ENCODE measurements at regions of chr1 and their contacts with region 1.

Region 1: DNA sequence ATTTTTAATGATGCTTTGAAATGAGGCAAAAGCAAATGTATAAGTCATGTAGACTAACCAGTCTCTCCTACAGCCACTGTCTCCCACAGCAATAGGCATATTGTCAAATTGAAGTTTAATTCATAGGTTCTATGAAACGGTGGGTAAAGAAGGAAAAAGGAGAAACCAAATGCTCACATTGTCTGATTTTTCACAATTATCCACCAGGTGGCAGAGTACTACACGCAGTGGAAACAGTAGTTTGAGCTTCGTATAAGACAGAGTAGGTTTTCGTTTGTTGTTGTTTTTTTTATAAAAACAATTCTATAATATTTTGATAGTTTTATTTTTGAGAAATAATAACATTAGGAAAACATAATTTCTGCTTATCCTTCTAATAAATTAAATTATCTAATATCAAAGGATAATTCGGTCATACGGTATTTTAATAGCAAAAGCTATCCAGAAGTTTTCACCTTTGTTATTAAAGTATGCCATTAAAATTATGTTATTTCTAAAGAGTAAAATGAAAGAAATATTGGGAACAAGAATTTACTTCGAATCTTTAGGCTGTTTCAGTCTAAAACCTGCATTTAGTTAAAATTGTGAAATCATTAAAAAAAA is 39.1 kb downstream of the TYW3 start:
- DNase-seq: peak; percentile 7
- H3K4me3 ChIP-seq: peak overlapping the region in 1 of 2 experiments; percentile 22; a peak in 1 of 4 replicates
- H3K27ac ChIP-seq: no peak overlapping the region
- H3K4me1 ChIP-seq: no peaks in the 10 kb centered on the region; a peak in 1 of 4 replicates
- H3K27me3 ChIP-seq: 0 out of 2 replicates have a peak, but pooled peaks cover 5% of the 10 kb centered on the region
- CTCF ChIP-seq: peak; percentile 76
- EP300 ChIP-seq: no peak
- RAD21 ChIP-seq: peak; percentile 86

Region 2: GRCh38 chr1:74504125-74504932 is 267.7 kb before region 1 on chr1:
- CTCF ChIA-PET with region 1: no interaction called
- POLR2A ChIA-PET with region 1: no interaction called
- DNase-seq: peak; percentile 59
- H3K4me3 ChIP-seq: no peak overlapping the region; a peak in 1 of 4 replicates
- H3K27ac ChIP-seq: peak overlapping the region in 1 of 2 experiments; percentile 95; a peak in 2 of 4 replicates
- H3K4me1 ChIP-seq: peaks cover 0 to 23% of the 10 kb centered on the region in 2 experiments; a peak in 2 of 4 replicates
- H3K27me3 ChIP-seq: no peaks in the 10 kb centered on the region
- CTCF ChIP-seq: peak; percentile 81
- EP300 ChIP-seq: no peak
- RAD21 ChIP-seq: peak; percentile 84

Region 3: DNA sequence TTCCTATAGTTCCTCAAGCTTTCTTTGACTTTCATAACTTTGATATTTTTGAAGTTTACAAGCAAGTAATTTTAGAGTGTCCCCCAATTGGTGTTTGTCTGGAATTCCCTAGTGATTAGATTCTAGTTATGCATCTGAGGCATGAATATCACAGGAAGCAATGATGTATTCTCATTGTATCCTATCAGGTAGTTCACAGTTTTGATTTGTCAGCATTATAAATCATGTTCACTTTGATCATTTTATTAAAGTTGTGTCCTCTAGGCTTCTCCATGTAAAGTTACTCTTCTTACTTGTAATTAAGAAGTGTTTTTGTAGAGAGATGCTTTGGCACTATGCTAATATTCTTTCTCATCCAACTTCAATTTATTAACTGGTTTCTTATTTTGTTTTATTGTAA is 13.9 kb after region 1 on chr1:
- CTCF ChIA-PET with region 1: interaction called, 11 read pairs
- POLR2A ChIA-PET with region 1: no interaction called
- DNase-seq: no peak
- H3K4me3 ChIP-seq: no peak overlapping the region
- H3K27ac ChIP-seq: no peak overlapping the region
- H3K4me1 ChIP-seq: no peaks in the 10 kb centered on the region
- H3K27me3 ChIP-seq: no peaks in the 10 kb centered on the region
- CTCF ChIP-seq: no peak
- EP300 ChIP-seq: no peak
- RAD21 ChIP-seq: no peak

Region 4: DNA sequence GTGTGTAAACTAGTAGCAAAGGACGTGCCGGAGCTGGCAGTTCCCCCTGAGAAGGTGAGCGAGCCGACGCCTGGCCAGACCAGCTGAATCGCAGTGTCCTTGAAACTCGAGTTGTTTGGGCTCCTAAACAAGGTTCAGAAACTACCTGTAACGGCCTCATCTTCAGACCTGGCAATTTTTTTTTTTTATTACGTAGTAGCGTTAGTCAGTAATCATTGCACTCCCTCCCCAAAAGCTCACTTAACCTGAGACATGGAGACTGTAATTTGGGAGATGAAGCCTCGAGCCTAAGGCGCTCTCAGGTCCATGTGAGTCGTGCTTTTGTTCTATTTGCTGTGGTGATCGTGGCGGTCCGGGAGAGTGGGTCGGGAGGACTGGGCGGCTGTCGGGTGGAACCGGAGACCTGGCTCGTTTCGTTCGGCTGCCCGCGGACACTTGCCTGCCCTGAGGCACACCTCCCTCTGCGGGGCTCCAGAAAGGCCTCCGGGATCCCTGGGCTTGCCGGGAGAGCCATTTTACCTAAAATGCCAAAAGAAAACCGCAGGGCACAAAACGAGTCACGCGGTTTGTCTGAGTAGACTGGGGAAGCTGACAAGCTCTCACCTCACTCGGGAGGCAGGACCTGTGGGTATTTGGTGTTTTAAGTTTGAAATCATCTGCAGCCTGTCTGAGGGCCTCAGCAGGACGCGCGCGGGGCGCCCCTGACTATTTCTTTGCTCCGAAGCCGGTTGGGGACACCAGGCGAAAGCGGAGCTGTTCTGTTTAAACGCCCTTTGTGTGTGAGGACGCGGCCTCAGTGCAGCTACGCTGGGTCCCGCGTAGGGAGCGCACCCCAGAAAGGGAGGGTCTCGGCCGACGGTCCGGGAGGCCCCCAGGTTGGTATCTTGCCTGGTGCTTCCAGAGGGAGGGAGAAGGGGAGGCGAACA is 362.9 kb after region 1 on chr1:
- CTCF ChIA-PET with region 1: interaction called, 18 read pairs
- POLR2A ChIA-PET with region 1: no interaction called
- DNase-seq: peak; percentile 38
- H3K4me3 ChIP-seq: no peak overlapping the region; a peak in 1 of 4 replicates
- H3K27ac ChIP-seq: no peak overlapping the region
- H3K4me1 ChIP-seq: peaks cover 0 to 21% of the 10 kb centered on the region in 2 experiments; a peak in 2 of 4 replicates
- H3K27me3 ChIP-seq: peaks cover 88% of the 10 kb centered on the region
- CTCF ChIP-seq: no peak
- EP300 ChIP-seq: no peak
- RAD21 ChIP-seq: no peak

Region 5: DNA sequence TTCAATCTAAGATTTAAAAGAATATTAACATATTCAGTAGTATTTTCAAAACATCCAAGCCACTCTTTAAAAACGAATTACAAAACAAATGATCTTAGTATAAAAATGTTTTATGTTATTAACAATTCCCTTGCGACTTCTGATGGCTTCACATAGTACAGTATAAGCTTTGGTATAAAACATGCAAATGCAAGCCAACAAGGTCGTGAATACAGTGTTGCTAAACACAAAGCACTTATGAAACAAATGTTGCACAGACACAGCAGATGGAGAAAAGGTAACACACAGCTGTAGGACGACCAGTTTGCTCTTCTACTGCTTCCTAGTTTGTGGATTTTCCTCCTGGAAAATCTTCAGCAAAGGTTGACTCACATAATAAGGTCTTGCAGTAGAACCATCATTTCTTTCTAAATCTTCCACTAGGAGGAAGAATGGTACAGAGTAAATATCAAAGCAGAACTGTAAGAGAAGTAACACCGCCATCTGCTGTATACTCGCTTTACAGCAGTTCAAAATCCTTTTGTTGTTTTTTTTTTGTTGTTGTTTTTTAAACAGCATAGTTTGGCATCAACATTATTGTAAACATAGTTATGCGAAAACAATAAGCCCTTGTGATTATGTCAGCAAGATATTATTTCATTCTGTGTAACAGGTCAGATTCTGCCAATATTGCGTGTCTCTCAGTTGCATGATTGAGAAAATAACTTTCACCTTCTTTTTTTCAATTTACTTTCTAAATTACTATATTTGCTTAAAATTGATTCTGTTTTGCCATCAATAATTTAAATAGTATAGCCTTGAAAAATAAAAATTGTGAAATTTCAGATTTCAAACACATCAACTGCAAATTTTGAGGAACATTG is 431.6 kb after region 1 on chr1:
- CTCF ChIA-PET with region 1: interaction called, 79 read pairs
- POLR2A ChIA-PET with region 1: no interaction called
- DNase-seq: peak; percentile 33
- H3K4me3 ChIP-seq: peak overlapping the region in 1 of 2 experiments; percentile 42; a peak in 1 of 4 replicates
- H3K27ac ChIP-seq: no peak overlapping the region
- H3K4me1 ChIP-seq: no peaks in the 10 kb centered on the region
- H3K27me3 ChIP-seq: no peaks in the 10 kb centered on the region; the same call in 1 of the 2 replicates
- CTCF ChIP-seq: peak; percentile 97
- EP300 ChIP-seq: no peak
- RAD21 ChIP-seq: peak; percentile 93

Region 6: GRCh38 chr1:75208862-75209261 is 436.8 kb after region 1 on chr1:
- CTCF ChIA-PET with region 1: interaction called, 79 read pairs
- POLR2A ChIA-PET with region 1: no interaction called
- DNase-seq: no peak
- H3K4me3 ChIP-seq: no peak overlapping the region
- H3K27ac ChIP-seq: no peak overlapping the region
- H3K4me1 ChIP-seq: no peaks in the 10 kb centered on the region
- H3K27me3 ChIP-seq: no peaks in the 10 kb centered on the region
- CTCF ChIP-seq: no peak
- EP300 ChIP-seq: no peak
- RAD21 ChIP-seq: no peak

Measured in SK-N-SH (cell line).